Posterior vena cava (tissue), 2 donors: ENCODE measurements at regions of chr12 and their contacts with region 1.

Region 1: DNA sequence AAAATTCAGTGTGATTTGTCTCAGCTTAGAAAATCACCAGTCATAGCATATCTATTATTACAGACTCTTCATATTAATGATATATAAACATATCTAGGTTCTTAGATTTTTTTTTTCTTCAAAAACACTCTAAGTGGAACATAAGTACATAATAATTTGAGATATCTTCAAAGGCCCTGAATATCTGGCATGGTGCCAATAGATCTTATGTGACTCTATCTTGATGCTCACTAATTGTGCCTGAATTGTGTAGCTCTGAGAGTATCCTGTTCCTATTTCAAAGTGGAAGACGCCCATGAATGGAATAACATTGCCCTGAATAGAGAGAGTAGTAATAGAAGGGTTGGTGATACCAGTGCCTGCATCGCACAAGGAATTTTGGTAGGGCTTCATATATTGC is 1312.7 kb upstream of the USP15 start:
- DNase-seq: no peak

Region 2: GRCh38 chr12:60630796-60631195 is 316.7 kb before region 1 on chr12:
- intact Hi-C with region 1: no loop called
- DNase-seq: no peak

Region 3: GRCh38 chr12:61107118-61107517 is 159.6 kb after region 1 on chr12:
- intact Hi-C with region 1: loop called in 1 of 2 experiments (anchors 10 kb)
- DNase-seq: no peak